Activated naive CD4-positive, alpha-beta T cell treated with anti-CD3 and anti-CD28 coated beads, Interleukin-2, amount 10 ng/mL, durations not matched to agents 7 days and 5 days (primary cell): ENCODE measurements at regions of chr9 and their contacts with region 1.

Region 1: GRCh38 chr9:19174127-19174912 is 47.0 kb upstream of the PLIN2 start:
- DNase-seq: peak; percentile 52
- H3K4me3 Mint-ChIP-seq: no peak overlapping the region
- H3K27ac Mint-ChIP-seq: no peak overlapping the region
- H3K4me1 Mint-ChIP-seq: peaks cover 33% of the 10 kb centered on the region
- H3K27me3 Mint-ChIP-seq: no peaks in the 10 kb centered on the region

Region 2: GRCh38 chr9:19048966-19049916 is 125.1 kb before region 1 on chr9 and contains the start of gene RRAGA:
- CTCF ChIA-PET with region 1: interaction called, 39 read pairs
- DNase-seq: peak; percentile 96
- H3K4me3 Mint-ChIP-seq: peak within 1 kb of the TSS; percentile 87
- H3K27ac Mint-ChIP-seq: peak within 1 kb of the TSS; percentile 98
- H3K4me1 Mint-ChIP-seq: peaks cover 35% of the 10 kb centered on the region
- H3K27me3 Mint-ChIP-seq: peaks cover 4% of the 10 kb centered on the region

Region 3: GRCh38 chr9:19102631-19103345 is 71.5 kb before region 1 on chr9 and contains the start of gene HAUS6:
- CTCF ChIA-PET with region 1: interaction called, 10 read pairs
- DNase-seq: peak; percentile 98
- H3K4me3 Mint-ChIP-seq: peak within 1 kb of the TSS; percentile 94
- H3K27ac Mint-ChIP-seq: peak within 1 kb of the TSS; percentile 93
- H3K4me1 Mint-ChIP-seq: peaks cover 37% of the 10 kb centered on the region
- H3K27me3 Mint-ChIP-seq: no peaks in the 10 kb centered on the region

Region 4: DNA sequence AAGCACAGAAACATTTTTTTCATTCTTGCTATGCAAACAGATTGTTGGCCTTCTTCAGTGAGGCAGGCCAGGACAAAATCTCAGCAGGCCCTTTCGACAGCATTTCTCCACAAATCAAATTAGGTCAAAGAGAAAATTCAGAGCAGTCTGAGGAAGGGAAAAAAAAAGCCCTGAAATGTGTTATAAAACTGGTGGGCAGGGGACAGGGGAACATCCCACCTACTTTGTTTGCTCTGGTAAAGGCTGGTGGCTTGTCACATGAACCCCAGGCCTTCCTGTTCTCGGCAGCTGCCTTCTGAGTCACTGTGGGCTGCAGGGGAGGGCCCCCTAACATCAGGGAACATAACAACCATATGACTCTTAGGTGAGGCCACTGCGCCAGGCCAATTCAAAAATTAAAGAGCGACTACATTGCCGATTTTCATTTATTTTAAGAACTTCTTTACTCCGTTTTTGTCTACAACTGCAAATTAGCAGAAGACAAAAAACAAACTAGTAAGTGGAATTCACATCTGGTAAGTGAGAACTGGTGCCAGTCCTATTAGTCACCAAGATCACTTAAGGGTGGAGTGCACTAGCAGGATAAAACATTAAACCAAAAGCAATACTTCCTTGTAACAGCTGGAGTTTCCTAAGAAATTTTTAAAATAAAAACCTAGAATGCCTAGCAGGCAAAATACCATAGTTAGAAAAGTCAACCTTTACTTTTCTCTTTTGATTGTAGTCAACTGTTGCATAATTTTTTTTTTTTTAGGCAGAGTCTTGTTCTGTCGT is 10.0 kb after region 1 on chr9:
- CTCF ChIA-PET with region 1: interaction called, 12 read pairs
- DNase-seq: peak; percentile 81
- H3K4me3 Mint-ChIP-seq: peak overlapping the region; percentile 16
- H3K27ac Mint-ChIP-seq: peak overlapping the region; percentile 97
- H3K4me1 Mint-ChIP-seq: peaks cover 24% of the 10 kb centered on the region
- H3K27me3 Mint-ChIP-seq: no peaks in the 10 kb centered on the region